B cell (primary cell): ENCODE measurements at regions of chr18 and their contacts with region 1.

Region 1: GRCh38 chr18:2606335-2606734 is 35.0 kb downstream of the NDC80 start:
- DNase-seq: peak; percentile 21
- ATAC-seq: no peak
- H3K4me3 ChIP-seq: peak overlapping the region in 1 of 5 experiments; percentile 20
- H3K4me3 Mint-ChIP-seq: peak overlapping the region; percentile 70
- H3K27ac ChIP-seq: peak overlapping the region; percentile 19 to 66
- H3K27ac Mint-ChIP-seq: peak overlapping the region; percentile 69
- H3K4me1 ChIP-seq: peaks cover 6 to 17% of the 10 kb centered on the region in 2 donors
- H3K4me1 Mint-ChIP-seq: peaks cover 22% of the 10 kb centered on the region
- H3K27me3 ChIP-seq: no peaks in the 10 kb centered on the region
- H3K27me3 Mint-ChIP-seq: no peaks in the 10 kb centered on the region
- CTCF ChIP-seq: no peak

Region 2: GRCh38 chr18:2571200-2572143 is 34.9 kb before region 1 on chr18 and contains the starts of genes METTL4 and NDC80:
- CTCF ChIA-PET with region 1: interaction called, 6 read pairs
- POLR2A ChIA-PET with region 1: interaction called, 3 read pairs
- intact Hi-C with region 1: loop called (anchors 2 kb)
- DNase-seq: peak; percentile 95
- ATAC-seq: peak; percentile 93
- H3K4me3 ChIP-seq: peak within 1 kb of the TSS; percentile 70 to 99 (median 81)
- H3K4me3 Mint-ChIP-seq: peak within 1 kb of the TSS; percentile 99
- H3K27ac ChIP-seq: peak within 1 kb of the TSS; percentile 97 to 98
- H3K27ac Mint-ChIP-seq: peak within 1 kb of the TSS; percentile 99
- H3K4me1 ChIP-seq: peaks cover 22 to 23% of the 10 kb centered on the region in 2 donors
- H3K4me1 Mint-ChIP-seq: peaks cover 45% of the 10 kb centered on the region
- H3K27me3 ChIP-seq: no peaks in the 10 kb centered on the region
- H3K27me3 Mint-ChIP-seq: no peaks in the 10 kb centered on the region
- CTCF ChIP-seq: no peak
- total RNA-seq, gene METTL4: 23.9 and 31.6 TPM in 2 replicates
- total RNA-seq, gene NDC80: 3.7 and 3.9 TPM in 2 replicates

Region 3: GRCh38 chr18:2589345-2590068 is 16.8 kb before region 1 on chr18:
- CTCF ChIA-PET with region 1: interaction called, 4 read pairs
- POLR2A ChIA-PET with region 1: no interaction called
- intact Hi-C with region 1: loop called (anchors 2 kb)
- DNase-seq: no peak
- ATAC-seq: no peak
- H3K4me3 ChIP-seq: peak overlapping the region in 3 of 5 experiments; percentile 1 to 38 (median 13)
- H3K4me3 Mint-ChIP-seq: peak overlapping the region; percentile 59
- H3K27ac ChIP-seq: peak overlapping the region; percentile 65 to 89
- H3K27ac Mint-ChIP-seq: peak overlapping the region; percentile 84
- H3K4me1 ChIP-seq: peaks cover 20 to 22% of the 10 kb centered on the region in 2 donors
- H3K4me1 Mint-ChIP-seq: peaks cover 29% of the 10 kb centered on the region
- H3K27me3 ChIP-seq: no peaks in the 10 kb centered on the region
- H3K27me3 Mint-ChIP-seq: no peaks in the 10 kb centered on the region
- CTCF ChIP-seq: no peak

Region 4: DNA sequence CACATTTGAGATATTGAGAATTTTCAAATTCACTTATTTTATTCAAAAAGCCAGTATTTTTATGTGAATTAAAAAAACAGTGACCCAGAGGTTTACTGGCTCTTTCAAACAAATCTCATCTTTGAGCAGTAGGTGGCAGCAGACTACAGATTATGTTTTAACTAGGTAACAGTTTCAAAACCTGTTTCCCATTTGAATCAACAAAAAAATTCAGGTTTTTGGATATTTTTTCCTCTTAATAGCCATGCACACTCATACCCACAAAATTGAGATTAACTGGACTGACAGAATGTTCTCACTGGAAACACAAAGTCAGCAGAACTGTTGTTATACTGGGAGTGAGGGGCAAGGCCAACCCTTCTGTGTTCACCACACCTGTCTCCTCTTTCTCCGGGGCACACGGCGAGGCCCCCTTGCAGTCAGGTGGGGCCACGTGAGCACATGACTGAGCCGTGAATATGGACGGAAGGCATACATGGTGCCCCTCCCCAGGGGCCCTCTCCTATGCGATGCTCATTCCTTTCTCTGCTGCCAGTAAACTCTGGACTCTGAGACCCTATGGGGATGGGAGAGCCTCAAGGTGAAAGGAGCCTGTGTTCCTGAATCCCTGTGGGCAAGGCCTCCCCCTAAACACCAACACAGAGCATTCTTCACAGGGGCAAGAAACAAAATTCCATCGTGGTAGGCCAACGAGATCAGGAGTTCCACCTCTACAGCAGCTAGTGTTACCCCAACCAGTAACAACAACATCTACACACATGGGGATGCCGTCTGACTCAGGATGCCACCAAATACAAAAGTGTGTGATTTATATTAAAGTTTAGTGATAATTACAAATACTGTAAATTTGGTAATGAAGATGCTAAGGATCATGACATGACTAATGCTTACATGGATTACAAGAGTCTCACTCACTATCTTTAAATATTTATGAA is 326.2 kb after region 1 on chr18:
- CTCF ChIA-PET with region 1: no interaction called
- POLR2A ChIA-PET with region 1: no interaction called
- intact Hi-C with region 1: no loop called
- DNase-seq: peak; percentile 78
- ATAC-seq: peak; percentile 73
- H3K4me3 ChIP-seq: no peak overlapping the region
- H3K4me3 Mint-ChIP-seq: no peak overlapping the region
- H3K27ac ChIP-seq: no peak overlapping the region
- H3K27ac Mint-ChIP-seq: peak overlapping the region; percentile 64
- H3K4me1 ChIP-seq: peaks cover 0 to 4% of the 10 kb centered on the region in 2 donors
- H3K4me1 Mint-ChIP-seq: peaks cover 8% of the 10 kb centered on the region
- H3K27me3 ChIP-seq: no peaks in the 10 kb centered on the region
- H3K27me3 Mint-ChIP-seq: no peaks in the 10 kb centered on the region
- CTCF ChIP-seq: peak; percentile 92